ENCODE measurements at regions of chr6 and their contacts with region 1.

Region 1: GRCh38 chr6:26196846-26197648 is 109.8 kb downstream of the HFE start:
- DNase-seq: peak; percentile 96
- H3K4me3 ChIP-seq: peak overlapping the region; percentile 91
- H3K27ac ChIP-seq: peak overlapping the region; percentile 93
- H3K4me1 ChIP-seq: peaks cover 39% of the 10 kb centered on the region
- CTCF ChIP-seq: peak; percentile 31; the same call in 1 of the 2 replicates

Region 2: DNA sequence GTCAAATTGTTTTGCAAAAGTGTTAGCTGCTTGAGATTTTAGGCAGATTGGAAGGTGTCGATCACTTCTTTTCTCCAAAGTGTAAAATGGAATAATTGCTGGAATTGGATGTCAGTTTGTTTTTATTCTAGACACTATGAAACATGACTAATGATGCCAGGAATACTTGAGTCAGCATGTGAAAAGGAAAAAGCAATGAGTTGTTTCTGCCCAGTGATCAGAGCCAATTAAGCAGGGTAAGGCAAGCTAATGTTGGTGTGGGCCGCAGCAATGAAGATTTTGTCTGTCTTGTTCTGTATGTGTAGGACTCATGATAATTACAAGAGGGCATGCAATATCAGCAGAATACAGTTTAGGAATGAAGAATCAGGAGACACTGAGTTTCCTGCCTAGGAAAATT is 807.6 kb before region 1 on chr6:
- CTCF ChIA-PET with region 1: no interaction called
- POLR2A ChIA-PET with region 1: interaction called, 3 read pairs
- intact Hi-C with region 1: loop called (anchors 5 kb)
- DNase-seq: no peak
- H3K4me3 ChIP-seq: peak overlapping the region; percentile 60
- H3K27ac ChIP-seq: peak overlapping the region; percentile 99
- H3K4me1 ChIP-seq: peaks cover 94% of the 10 kb centered on the region
- CTCF ChIP-seq: no peak

Region 3: GRCh38 chr6:26103770-26104456 is 93.1 kb before region 1 on chr6:
- CTCF ChIA-PET with region 1: no interaction called
- POLR2A ChIA-PET with region 1: interaction called, 8 read pairs
- intact Hi-C with region 1: loop called (anchors 1 kb)
- DNase-seq: peak; percentile 94
- H3K4me3 ChIP-seq: peak overlapping the region; percentile 66
- H3K27ac ChIP-seq: peak overlapping the region; percentile 96
- H3K4me1 ChIP-seq: peaks cover 25% of the 10 kb centered on the region
- CTCF ChIP-seq: peak; percentile 65

Region 4: DNA sequence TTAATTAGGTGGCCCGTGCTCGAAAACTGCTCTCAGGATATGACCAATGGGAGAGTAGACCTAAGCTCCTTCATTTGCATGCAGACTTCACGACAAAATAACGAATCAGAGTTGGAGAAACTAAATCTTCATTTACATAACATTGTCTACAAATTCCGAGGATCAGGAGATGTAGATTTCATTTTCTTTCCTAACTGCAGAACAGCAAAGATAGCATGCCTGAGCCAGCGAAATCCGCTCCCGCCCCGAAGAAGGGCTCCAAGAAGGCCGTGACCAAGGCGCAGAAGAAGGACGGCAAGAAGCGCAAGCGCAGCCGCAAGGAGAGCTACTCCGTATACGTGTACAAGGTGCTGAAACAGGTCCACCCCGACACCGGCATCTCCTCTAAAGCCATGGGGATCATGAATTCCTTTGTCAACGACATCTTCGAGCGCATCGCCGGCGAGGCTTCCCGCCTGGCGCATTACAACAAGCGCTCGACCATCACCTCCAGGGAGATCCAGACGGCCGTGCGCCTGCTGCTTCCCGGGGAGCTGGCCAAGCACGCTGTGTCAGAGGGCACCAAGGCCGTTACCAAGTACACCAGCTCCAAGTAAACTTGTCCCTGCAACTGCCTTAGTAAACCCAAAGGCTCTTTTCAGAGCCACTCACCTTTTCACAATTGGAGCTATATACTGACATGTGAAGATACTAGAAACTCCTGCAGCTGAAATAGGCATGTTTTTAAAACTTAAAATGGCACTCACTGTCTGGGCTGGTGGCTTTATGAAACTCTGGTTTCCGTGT is 13.3 kb before region 1 on chr6:
- CTCF ChIA-PET with region 1: interaction called, 3 read pairs
- POLR2A ChIA-PET with region 1: interaction called, 113 read pairs
- intact Hi-C with region 1: no loop called
- DNase-seq: no peak
- H3K4me3 ChIP-seq: no peak overlapping the region
- H3K27ac ChIP-seq: no peak overlapping the region
- H3K4me1 ChIP-seq: peaks cover 22% of the 10 kb centered on the region
- CTCF ChIP-seq: no peak

Region 5: DNA sequence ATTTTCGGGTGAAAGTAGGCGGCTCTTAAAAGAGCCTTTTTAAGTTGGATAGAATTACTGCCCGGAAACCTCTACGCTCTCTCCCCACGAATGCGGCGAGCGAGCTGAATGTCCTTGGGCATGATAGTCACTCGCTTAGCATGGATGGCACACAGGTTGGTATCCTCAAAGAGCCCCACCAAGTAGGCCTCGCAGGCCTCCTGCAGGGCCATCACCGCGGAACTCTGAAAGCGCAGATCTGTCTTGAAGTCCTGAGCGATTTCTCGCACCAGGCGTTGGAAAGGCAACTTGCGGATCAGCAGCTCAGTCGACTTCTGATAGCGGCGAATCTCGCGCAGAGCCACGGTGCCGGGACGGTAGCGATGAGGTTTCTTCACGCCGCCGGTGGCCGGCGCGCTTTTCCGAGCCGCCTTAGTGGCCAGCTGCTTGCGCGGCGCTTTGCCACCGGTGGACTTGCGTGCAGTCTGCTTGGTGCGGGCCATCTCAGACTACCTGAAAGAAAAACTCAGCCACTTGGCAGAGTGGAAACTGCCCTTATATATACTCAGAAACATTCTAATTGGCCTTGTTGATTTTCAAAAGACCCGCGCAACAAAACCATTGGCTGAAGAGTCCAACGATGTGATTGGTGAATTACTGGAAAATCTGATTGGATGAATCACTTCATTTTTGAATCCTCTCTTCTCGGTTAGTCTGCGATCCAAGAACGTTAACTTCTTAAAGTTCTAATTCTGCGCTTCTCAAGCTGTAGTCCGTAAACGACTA is 74.0 kb after region 1 on chr6:
- CTCF ChIA-PET with region 1: interaction called, 3 read pairs
- POLR2A ChIA-PET with region 1: interaction called, 307 read pairs
- intact Hi-C with region 1: loop called (anchors 5 kb)
- DNase-seq: peak; percentile 98
- H3K4me3 ChIP-seq: peak overlapping the region; percentile 87
- H3K27ac ChIP-seq: peak overlapping the region; percentile 99
- H3K4me1 ChIP-seq: peaks cover 42% of the 10 kb centered on the region
- CTCF ChIP-seq: no peak; the same call in 1 of the 2 replicates

Region 6: GRCh38 chr6:26375270-26375669 is 178.2 kb after region 1 on chr6:
- CTCF ChIA-PET with region 1: no interaction called
- POLR2A ChIA-PET with region 1: no interaction called
- intact Hi-C with region 1: no loop called
- DNase-seq: peak; percentile 67
- H3K4me3 ChIP-seq: peak overlapping the region; percentile 18
- H3K27ac ChIP-seq: peak overlapping the region; percentile 79
- H3K4me1 ChIP-seq: peaks cover 18% of the 10 kb centered on the region
- CTCF ChIP-seq: no peak; the same call in 1 of the 2 replicates

Region 7: GRCh38 chr6:27838058-27838944 is 1641.3 kb after region 1 on chr6:
- CTCF ChIA-PET with region 1: no interaction called
- POLR2A ChIA-PET with region 1: interaction called, 11 read pairs
- intact Hi-C with region 1: no loop called
- DNase-seq: peak; percentile 99
- H3K4me3 ChIP-seq: peak overlapping the region; percentile 87
- H3K27ac ChIP-seq: peak overlapping the region; percentile 97
- H3K4me1 ChIP-seq: peaks cover 37% of the 10 kb centered on the region
- CTCF ChIP-seq: no peak